Mammary epithelial cell (primary cell): ENCODE measurements at regions of chr20 and their contacts with region 1.

Region 1: DNA sequence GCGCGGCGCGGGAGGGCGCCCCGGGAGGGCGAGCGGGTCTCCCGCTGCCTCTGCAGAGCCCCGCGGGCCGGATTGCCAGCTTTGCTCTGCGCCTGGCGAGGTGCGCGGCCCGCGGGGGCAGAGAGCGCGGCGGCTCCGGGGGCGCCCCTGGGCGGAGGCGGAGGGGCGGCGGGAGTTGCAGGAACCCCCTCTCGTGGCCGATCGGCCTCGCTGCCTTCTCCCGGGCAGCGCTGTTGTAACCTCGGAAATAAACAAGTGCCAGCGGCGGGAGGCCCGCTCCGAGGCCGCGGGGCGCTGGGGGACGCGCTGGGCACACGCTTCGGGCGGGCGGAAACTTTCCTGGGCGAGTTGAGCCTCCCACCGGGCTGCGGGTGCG is 1.2 kb downstream of the CDH4 start:
- DNase-seq: no peak
- H3K4me3 ChIP-seq: peak overlapping the region; percentile 57 to 84 (median 71)
- H3K27ac ChIP-seq: peak overlapping the region; percentile 30
- H3K4me1 ChIP-seq: peaks cover 29% of the 10 kb centered on the region
- H3K27me3 ChIP-seq: peaks cover 4% of the 10 kb centered on the region
- CTCF ChIP-seq: peak; percentile 8 to 52

Region 2: DNA sequence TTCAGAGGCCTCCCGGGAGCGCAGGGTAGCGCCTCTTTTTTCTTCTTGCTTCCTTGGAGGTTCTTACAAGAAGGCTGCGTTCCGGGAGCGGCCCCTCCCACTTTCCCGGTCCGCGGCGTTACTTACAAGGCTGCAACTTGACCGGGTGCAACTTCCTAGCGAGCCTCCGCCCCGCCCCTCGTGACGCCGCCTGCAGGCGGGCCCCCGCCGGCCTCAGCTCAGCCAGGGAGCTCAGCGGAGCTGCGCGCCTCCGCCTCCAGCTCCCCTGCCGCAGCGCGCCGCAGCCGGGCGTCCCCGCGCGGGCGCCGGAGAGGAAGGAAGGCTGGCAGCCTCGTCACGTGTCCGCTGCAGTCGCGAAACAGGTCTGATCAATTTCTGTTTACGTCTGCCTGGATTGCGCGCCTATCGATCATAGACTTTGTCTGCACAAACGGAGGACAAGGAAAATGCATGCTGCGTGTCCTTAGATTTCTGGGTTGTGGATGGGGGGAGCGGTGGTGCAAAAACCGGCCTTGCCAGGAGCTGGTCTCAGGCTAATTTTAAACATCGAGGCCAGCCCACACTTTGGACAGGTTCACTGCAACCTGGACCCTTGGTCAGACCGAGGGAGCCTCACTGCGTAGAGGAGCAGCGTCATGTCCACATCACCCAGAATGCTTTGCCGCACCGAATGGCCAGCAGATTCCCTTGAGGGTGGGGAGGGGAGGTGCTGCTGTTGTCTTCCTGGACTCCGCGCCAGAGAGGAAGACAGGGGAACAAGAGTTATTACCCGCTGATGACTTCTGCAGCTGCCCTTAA is 1312.9 kb before region 1 on chr20 and contains the starts of genes FAM217B and PPP1R3D:
- CTCF ChIA-PET with region 1: no interaction called
- dilution Hi-C with region 1: no loop called
- in situ Hi-C with region 1: no loop called
- intact Hi-C with region 1: loop called (anchors 10 kb)
- DNase-seq: peak; percentile 96
- H3K4me3 ChIP-seq: peak within 1 kb of the TSS; percentile 57 to 78 (median 62)
- H3K27ac ChIP-seq: peak within 1 kb of the TSS; percentile 66
- H3K4me1 ChIP-seq: peaks cover 30% of the 10 kb centered on the region
- H3K27me3 ChIP-seq: no peaks in the 10 kb centered on the region
- CTCF ChIP-seq: no peak
- total RNA-seq, gene FAM217B: 6.8 to 13.7 TPM
- total RNA-seq, gene PPP1R3D: 6.4 to 6.8 TPM

Region 3: GRCh38 chr20:60057123-60057801 is 1196.0 kb before region 1 on chr20:
- CTCF ChIA-PET with region 1: no interaction called
- dilution Hi-C with region 1: no loop called
- in situ Hi-C with region 1: no loop called
- intact Hi-C with region 1: loop called (anchors 10 kb)
- DNase-seq: peak; percentile 65
- H3K4me3 ChIP-seq: peak overlapping the region in 1 of 3 experiments; percentile 58
- H3K27ac ChIP-seq: no peak overlapping the region
- H3K4me1 ChIP-seq: peaks cover 63% of the 10 kb centered on the region
- H3K27me3 ChIP-seq: no peaks in the 10 kb centered on the region
- CTCF ChIP-seq: peak; percentile 90

Region 4: GRCh38 chr20:60851826-60852704 is 401.2 kb before region 1 on chr20:
- CTCF ChIA-PET with region 1: interaction called, 9 read pairs
- dilution Hi-C with region 1: no loop called
- in situ Hi-C with region 1: no loop called
- intact Hi-C with region 1: loop called (anchors 10 kb)
- DNase-seq: no peak
- H3K4me3 ChIP-seq: no peak overlapping the region
- H3K27ac ChIP-seq: no peak overlapping the region
- H3K4me1 ChIP-seq: no peaks in the 10 kb centered on the region
- H3K27me3 ChIP-seq: no peaks in the 10 kb centered on the region
- CTCF ChIP-seq: peak; percentile 69 to 84

Region 5: DNA sequence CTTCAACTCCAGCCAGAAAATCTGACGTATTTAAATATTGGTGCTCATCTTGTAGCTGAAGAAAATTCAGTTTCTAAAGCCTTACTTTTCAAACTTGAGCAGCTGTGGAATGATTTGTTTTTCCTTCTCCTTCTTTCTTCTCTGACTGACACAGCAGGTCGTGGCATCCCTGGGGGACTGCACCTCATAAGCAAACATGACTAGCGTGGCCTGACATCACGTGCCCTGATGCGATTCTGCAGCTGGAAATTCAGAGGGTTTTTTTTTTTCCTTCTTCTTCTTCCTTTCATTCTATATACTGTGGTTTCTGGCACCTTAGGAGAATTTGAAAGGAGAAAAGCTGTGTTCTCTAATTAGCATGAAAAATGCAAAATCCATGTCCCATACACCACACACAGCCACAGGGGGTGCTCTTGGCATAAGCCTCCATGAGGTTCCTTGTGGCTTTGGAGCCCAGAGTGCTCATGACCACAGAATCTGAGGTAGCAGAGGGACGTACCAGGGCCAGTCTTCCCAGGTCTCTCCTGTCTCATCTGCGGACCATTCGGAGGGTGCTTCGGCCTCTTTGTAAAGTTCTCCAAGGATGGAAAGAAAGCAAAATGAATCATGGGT is 259.7 kb before region 1 on chr20:
- CTCF ChIA-PET with region 1: no interaction called
- dilution Hi-C with region 1: no loop called
- in situ Hi-C with region 1: no loop called
- intact Hi-C with region 1: loop called (anchors 10 kb)
- DNase-seq: no peak
- H3K4me3 ChIP-seq: no peak overlapping the region
- H3K27ac ChIP-seq: no peak overlapping the region
- H3K4me1 ChIP-seq: no peaks in the 10 kb centered on the region
- H3K27me3 ChIP-seq: peaks cover 5% of the 10 kb centered on the region
- CTCF ChIP-seq: peak; percentile 36 to 45

Region 6: DNA sequence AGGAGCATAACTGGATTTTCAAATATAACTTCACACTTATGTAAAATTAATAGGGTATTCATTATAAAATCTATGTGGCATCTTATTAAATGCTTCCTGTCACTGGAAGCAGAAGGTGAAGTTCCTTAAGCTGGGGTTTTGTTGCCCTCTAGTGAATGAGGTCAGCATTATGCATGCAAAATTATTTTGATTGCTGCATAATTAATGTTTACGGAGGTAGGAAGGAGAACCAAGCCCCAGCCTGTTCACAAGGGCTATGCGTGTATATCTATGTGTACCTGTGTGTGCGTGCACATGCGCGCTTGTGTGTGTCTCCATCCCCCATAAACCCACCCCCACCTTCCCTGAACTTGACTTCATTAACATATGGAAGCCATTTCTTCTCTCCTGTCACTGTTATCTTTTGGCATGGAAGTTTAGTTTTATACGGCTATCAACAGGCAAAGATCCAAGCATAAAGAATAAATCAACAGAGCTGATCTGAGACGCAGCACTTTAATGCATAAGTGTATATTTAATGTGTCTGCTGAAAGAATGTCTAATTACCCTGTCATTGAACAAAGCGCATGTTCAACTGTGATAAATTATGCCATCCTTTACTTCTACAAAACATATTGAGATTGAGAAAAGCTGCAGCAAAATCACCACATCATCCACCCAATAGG is 91.4 kb before region 1 on chr20:
- CTCF ChIA-PET with region 1: no interaction called
- dilution Hi-C with region 1: no loop called
- in situ Hi-C with region 1: no loop called
- intact Hi-C with region 1: no loop called
- DNase-seq: no peak
- H3K4me3 ChIP-seq: no peak overlapping the region
- H3K27ac ChIP-seq: no peak overlapping the region
- H3K4me1 ChIP-seq: no peaks in the 10 kb centered on the region
- H3K27me3 ChIP-seq: no peaks in the 10 kb centered on the region
- CTCF ChIP-seq: peak in 1 of 2 donors; percentile 10

Region 7: DNA sequence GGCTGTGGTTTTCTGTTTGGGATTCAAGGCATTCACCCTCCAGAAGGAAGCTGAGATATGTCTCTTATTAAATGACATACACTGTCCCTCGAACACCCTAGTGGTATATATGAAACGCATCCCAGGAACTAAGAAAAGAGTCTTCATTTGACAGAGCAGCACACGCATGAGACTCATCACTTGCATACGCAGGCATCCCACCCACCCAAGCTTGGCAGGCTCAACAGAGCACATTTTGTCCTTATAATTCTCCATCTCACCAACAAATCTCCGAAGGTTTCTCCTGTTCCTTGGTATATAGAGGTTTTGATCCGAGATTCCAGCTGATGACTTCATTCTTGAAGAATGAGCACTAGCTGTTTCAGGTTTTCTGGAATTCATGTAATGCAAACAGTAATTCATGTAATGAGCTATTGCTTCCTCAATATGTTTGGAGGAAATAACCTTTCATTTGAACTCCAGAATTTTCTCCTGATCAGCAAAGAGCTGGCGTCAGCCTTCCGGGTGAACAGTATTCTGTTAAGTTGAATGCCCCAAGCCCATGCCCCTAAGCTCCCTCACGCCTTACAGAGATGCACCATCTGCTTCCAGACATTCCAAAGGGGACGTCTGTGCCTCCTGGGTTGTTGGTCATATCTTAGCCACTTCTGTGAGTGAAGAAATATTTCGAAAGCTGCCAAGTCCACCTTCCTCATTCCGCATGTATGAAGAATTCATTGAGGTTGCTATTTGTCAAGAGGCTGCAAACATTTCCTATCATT is 67.2 kb before region 1 on chr20:
- CTCF ChIA-PET with region 1: no interaction called
- dilution Hi-C with region 1: no loop called
- in situ Hi-C with region 1: no loop called
- intact Hi-C with region 1: loop called (anchors 2 kb)
- DNase-seq: peak; percentile 86
- H3K4me3 ChIP-seq: no peak overlapping the region
- H3K27ac ChIP-seq: peak overlapping the region; percentile 86
- H3K4me1 ChIP-seq: peaks cover 42% of the 10 kb centered on the region
- H3K27me3 ChIP-seq: no peaks in the 10 kb centered on the region
- CTCF ChIP-seq: no peak

Region 8: GRCh38 chr20:61297986-61298385 is 44.7 kb after region 1 on chr20:
- CTCF ChIA-PET with region 1: no interaction called
- dilution Hi-C with region 1: no loop called
- in situ Hi-C with region 1: no loop called
- intact Hi-C with region 1: no loop called
- DNase-seq: peak; percentile 65
- H3K4me3 ChIP-seq: no peak overlapping the region
- H3K27ac ChIP-seq: no peak overlapping the region
- H3K4me1 ChIP-seq: peaks cover 16% of the 10 kb centered on the region
- H3K27me3 ChIP-seq: no peaks in the 10 kb centered on the region
- CTCF ChIP-seq: no peak